MCF 10A (cell line): ENCODE measurements at regions of chr9 and their contacts with region 1.

Region 1: GRCh38 chr9:34500623-34501267 is 22.0 kb downstream of the ENHO start:
- DNase-seq: peak; percentile 64
- H3K4me3 Mint-ChIP-seq: no peak overlapping the region
- H3K27ac Mint-ChIP-seq: no peak overlapping the region
- H3K4me1 Mint-ChIP-seq: peaks cover 7% of the 10 kb centered on the region
- H3K27me3 Mint-ChIP-seq: peaks cover 6% of the 10 kb centered on the region
- CTCF ChIP-seq: peak; percentile 94

Region 2: GRCh38 chr9:34413231-34413852 is 87.4 kb before region 1 on chr9:
- CTCF ChIA-PET with region 1: interaction called, 17 read pairs
- POLR2A ChIA-PET with region 1: no interaction called
- intact Hi-C with region 1: no loop called
- DNase-seq: peak; percentile 74
- H3K4me3 Mint-ChIP-seq: no peak overlapping the region
- H3K27ac Mint-ChIP-seq: no peak overlapping the region
- H3K4me1 Mint-ChIP-seq: no peaks in the 10 kb centered on the region
- H3K27me3 Mint-ChIP-seq: no peaks in the 10 kb centered on the region
- CTCF ChIP-seq: no peak

Region 3: DNA sequence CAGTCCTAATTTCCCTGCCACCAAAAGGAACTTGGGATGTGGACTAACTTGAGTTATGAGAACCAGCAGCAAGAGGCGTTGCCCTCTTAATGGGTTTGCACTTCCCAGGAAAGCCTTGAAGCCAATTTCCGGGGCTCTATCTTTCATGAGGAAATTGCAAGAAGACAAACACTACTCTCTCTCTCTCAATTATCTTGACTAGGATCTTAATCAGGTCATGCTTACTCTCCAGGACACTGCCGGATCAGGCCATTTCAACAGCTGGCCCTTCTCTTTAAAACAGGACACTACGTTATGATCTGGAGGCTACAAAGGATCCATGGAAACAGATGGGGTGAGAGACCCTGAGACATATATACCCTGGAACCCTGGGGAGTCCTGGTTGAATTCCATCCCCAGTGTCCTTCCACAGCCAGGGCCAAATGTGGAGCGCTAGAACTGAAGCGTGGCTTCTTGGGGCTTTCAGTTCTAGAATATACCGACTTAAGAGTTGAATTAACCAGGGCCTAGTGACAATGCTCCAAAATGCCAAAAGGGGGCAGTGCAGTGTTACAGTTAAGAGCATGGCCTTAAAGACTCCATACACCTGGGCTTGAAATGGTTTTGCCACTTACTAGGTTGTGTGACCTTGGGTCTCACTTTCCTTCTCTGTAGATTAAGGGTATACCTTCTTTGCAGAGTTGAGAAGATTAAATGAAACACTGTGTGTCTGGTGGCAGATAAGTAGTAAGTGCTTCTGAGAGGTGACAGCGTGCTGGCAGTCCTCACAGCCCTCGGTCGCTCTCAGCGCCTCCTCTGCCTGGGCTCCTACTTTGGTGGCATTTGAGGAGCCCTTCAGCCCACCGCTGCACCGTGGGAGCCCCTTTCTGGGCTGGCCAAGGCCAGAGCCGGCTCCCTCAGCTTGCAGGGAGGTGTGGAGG is 63.5 kb before region 1 on chr9:
- CTCF ChIA-PET with region 1: interaction called, 88 read pairs
- POLR2A ChIA-PET with region 1: no interaction called
- intact Hi-C with region 1: loop called (anchors 1 kb)
- DNase-seq: peak; percentile 81
- H3K4me3 Mint-ChIP-seq: no peak overlapping the region
- H3K27ac Mint-ChIP-seq: no peak overlapping the region
- H3K4me1 Mint-ChIP-seq: no peaks in the 10 kb centered on the region
- H3K27me3 Mint-ChIP-seq: no peaks in the 10 kb centered on the region
- CTCF ChIP-seq: peak; percentile 74

Region 4: GRCh38 chr9:34451545-34451944 is 49.2 kb before region 1 on chr9:
- CTCF ChIA-PET with region 1: interaction called, 33 read pairs
- POLR2A ChIA-PET with region 1: interaction called, 3 read pairs
- intact Hi-C with region 1: no loop called
- DNase-seq: no peak
- H3K4me3 Mint-ChIP-seq: no peak overlapping the region
- H3K27ac Mint-ChIP-seq: peak overlapping the region; percentile 12
- H3K4me1 Mint-ChIP-seq: peaks cover 12% of the 10 kb centered on the region
- H3K27me3 Mint-ChIP-seq: no peaks in the 10 kb centered on the region
- CTCF ChIP-seq: no peak

Region 5: DNA sequence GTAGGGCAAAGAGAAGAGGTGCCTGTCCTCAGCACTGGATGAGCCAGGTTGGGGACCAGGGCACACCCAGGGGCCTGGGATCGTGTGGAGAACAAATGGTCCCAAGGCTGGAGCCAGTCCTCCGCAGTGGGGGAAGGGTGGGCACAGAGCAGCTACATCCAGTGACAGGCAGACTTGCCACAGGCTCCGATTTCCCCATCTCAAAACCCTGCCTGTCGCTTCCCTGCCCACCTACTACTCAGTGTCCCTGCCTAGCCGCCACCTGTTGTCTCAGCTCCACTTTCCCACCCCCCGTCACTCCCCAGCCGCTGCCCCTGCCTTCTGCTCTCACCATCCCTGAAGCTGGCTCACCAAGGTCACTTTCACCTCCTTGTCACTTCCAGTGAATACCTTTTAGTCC is 35.9 kb after region 1 on chr9:
- CTCF ChIA-PET with region 1: interaction called, 11 read pairs
- POLR2A ChIA-PET with region 1: no interaction called
- intact Hi-C with region 1: no loop called
- DNase-seq: no peak
- H3K4me3 Mint-ChIP-seq: no peak overlapping the region
- H3K27ac Mint-ChIP-seq: no peak overlapping the region
- H3K4me1 Mint-ChIP-seq: peaks cover 8% of the 10 kb centered on the region
- H3K27me3 Mint-ChIP-seq: peaks cover 46% of the 10 kb centered on the region
- CTCF ChIP-seq: no peak

Region 6: DNA sequence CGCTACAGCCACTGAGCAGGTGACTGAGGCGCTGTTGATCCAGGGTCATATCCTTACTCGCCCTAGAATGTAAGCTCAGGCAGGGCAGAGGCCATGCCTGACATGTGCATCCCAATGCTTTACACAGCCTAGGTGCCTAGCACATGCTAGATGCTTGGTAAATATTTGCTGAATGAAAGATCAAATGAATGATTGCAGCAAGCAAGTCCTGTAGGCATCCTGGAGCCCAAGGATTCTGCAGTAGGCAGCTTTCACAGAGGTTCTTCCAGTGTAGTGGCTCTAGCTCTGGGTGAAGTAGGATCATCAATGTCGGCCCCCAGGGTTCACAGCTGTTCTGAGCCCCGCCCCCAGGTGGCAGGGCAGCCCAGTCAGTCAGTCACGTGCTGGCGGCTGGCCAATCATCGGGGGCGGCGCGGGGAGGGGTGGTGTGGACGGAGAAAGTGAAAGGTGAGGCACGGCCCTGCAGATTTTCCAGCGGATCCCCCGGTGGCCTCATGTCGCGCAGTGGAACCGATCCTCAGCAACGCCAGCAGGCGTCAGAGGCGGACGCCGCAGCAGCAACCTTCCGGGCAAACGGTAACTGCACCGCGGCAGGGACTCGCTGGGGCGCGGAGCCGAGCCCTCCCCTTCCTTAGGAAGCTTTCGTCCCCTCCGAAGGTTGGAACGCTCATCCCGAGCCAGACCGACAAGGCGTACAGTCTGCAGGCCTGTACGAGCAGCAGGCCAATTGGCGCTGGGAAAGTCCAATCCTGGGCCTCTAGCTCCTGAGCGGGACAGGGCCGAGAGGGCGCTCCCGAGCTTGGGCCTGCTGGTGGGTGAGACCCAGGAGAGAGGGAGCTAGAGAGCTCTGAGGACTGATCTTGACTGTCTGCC is 145.7 kb after region 1 on chr9 and contains the start of gene GALT:
- CTCF ChIA-PET with region 1: no interaction called
- POLR2A ChIA-PET with region 1: no interaction called
- intact Hi-C with region 1: no loop called
- DNase-seq: peak; percentile 92
- H3K4me3 Mint-ChIP-seq: peak within 1 kb of the TSS; percentile 84
- H3K27ac Mint-ChIP-seq: peak within 1 kb of the TSS; percentile 65
- H3K4me1 Mint-ChIP-seq: peaks cover 21% of the 10 kb centered on the region
- H3K27me3 Mint-ChIP-seq: no peaks in the 10 kb centered on the region
- CTCF ChIP-seq: peak; percentile 17
- total RNA-seq, gene GALT: 21.3 and 26.8 TPM in 2 replicates